PC-9 (cell line): ENCODE measurements at regions of chr22 and their contacts with region 1.

Region 1: GRCh38 chr22:41800348-41801146 is at the start of gene CCDC134:
- DNase-seq: peak; percentile 78 to 96
- H3K4me3 ChIP-seq: peak within 1 kb of the TSS; percentile 71
- H3K27ac ChIP-seq: peak within 1 kb of the TSS; percentile 46
- H3K4me1 ChIP-seq: peaks cover 27% of the 10 kb centered on the region
- H3K27me3 ChIP-seq: no peaks in the 10 kb centered on the region
- CTCF ChIP-seq: no peak
- total RNA-seq, gene CCDC134: 29.0 and 33.3 TPM in 2 replicates

Region 2: GRCh38 chr22:41603873-41604332 is 196.6 kb before region 1 on chr22:
- CTCF ChIA-PET with region 1: no interaction called
- POLR2A ChIA-PET with region 1: no interaction called
- intact Hi-C with region 1: no loop called
- DNase-seq: no peak
- H3K4me3 ChIP-seq: no peak overlapping the region
- H3K27ac ChIP-seq: no peak overlapping the region
- H3K4me1 ChIP-seq: no peaks in the 10 kb centered on the region
- H3K27me3 ChIP-seq: no peaks in the 10 kb centered on the region
- CTCF ChIP-seq: no peak

Region 3: DNA sequence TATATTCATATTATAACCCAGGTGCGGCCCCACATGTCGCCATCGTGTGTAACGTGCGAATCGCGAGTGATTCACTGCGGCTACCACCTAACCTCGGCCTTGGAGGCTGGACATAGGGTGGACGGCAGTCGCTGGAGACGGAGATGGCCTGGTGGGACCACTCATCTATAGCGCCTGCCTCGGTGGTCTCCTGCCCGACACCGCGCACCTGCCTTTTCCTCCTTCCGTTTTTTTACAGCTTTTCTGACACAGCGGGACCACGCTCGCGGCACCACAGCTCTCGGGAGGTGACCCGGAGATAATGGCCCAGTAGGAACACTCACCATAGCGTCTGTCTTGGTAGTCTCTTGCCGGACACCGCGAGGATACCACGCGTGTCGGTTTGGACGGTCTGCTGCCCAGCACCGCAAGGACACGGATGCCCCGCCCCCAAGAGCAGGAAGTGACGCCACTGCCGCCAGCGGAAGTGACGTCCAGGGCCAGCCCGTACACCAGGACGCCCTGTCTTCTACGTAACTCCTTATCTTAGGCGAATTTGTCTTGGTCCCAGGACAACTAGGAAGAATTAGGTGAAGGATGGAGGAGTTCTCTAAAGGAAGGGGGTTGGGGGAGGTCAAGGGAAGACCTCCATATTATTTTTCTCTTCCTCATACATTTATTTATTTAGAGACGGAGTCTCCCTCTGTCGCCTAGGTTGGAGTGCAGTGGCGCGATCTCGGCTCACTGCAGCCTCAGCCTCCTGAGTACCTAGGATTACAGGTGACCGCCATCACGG is 118.3 kb before region 1 on chr22:
- CTCF ChIA-PET with region 1: no interaction called
- POLR2A ChIA-PET with region 1: interaction called, 18 read pairs
- intact Hi-C with region 1: no loop called
- DNase-seq: peak; percentile 64 to 85
- H3K4me3 ChIP-seq: peak overlapping the region; percentile 65
- H3K27ac ChIP-seq: peak overlapping the region; percentile 59
- H3K4me1 ChIP-seq: peaks cover 22% of the 10 kb centered on the region
- H3K27me3 ChIP-seq: no peaks in the 10 kb centered on the region
- CTCF ChIP-seq: no peak

Region 4: GRCh38 chr22:41713004-41713403 is 87.5 kb before region 1 on chr22:
- CTCF ChIA-PET with region 1: no interaction called
- POLR2A ChIA-PET with region 1: interaction called, 19 read pairs
- intact Hi-C with region 1: no loop called
- DNase-seq: peak in 1 of 2 experiments; percentile 56
- H3K4me3 ChIP-seq: no peak overlapping the region
- H3K27ac ChIP-seq: no peak overlapping the region
- H3K4me1 ChIP-seq: peaks cover 6% of the 10 kb centered on the region; the same call in 1 of the 2 replicates
- H3K27me3 ChIP-seq: no peaks in the 10 kb centered on the region
- CTCF ChIP-seq: no peak

Region 5: GRCh38 chr22:41832553-41833368 is 32.2 kb after region 1 on chr22 and contains the start of gene SREBF2:
- CTCF ChIA-PET with region 1: no interaction called
- POLR2A ChIA-PET with region 1: interaction called, 6 read pairs
- intact Hi-C with region 1: loop called (anchors 1 kb)
- DNase-seq: peak; percentile 100
- H3K4me3 ChIP-seq: peak within 1 kb of the TSS; percentile 71
- H3K27ac ChIP-seq: peak within 1 kb of the TSS; percentile 77
- H3K4me1 ChIP-seq: peaks cover 21% of the 10 kb centered on the region
- H3K27me3 ChIP-seq: no peaks in the 10 kb centered on the region
- CTCF ChIP-seq: 0 out of 2 replicates have a peak, but pooled peaks have one; percentile 28
- total RNA-seq, gene SREBF2: 163 and 196 TPM in 2 replicates